ENCODE measurements at regions of chr10 and their contacts with region 1.

Region 1: GRCh38 chr10:60434418-60435046 is 44.9 kb upstream of the ANK3 start:
- DNase-seq: no peak
- ATAC-seq: no peak
- H3K4me3 ChIP-seq: no peak overlapping the region
- H3K27ac ChIP-seq: no peak overlapping the region
- H3K4me1 ChIP-seq: peaks cover under 1 to 1% of the 10 kb centered on the region in 2 donors
- H3K27me3 ChIP-seq: no peaks in the 10 kb centered on the region

Region 2: DNA sequence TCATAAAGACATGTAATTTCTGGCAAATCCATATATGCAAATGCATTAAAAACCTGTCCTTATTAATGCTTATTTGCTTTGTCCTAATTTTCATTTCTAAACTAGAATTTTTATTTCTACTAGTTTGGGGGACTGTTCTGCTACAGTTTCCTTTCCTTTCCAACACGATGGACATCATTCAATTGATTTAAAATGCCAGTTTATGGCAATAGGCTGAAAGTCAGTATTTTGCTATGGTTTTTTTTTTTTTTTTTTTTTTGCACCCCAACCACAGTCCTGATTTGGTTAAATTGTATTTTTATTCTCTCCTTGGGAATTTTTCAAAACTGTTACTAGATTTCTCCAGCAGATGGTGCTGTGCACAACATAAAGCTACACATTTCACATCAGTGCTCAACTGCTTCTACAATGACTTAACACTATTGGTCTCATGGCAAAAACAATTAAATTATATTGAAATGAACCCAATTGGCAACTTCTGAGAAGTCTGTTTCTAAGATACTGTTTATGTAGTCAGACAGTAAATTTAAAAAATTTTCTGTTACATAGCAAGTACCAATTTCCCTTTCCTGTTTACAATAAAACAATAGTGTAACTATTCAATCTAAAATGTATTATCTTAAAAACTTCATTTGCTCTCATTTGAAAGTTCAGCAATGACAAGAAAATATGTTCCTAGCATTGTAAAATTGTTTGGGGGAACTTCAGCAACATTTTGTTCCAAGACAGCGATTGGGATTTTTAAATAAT is 334.4 kb before region 1 on chr10:
- intact Hi-C with region 1: loop called (anchors 2 to 5 kb)
- DNase-seq: no peak
- ATAC-seq: peak; percentile 86
- H3K4me3 ChIP-seq: no peak overlapping the region
- H3K27ac ChIP-seq: no peak overlapping the region
- H3K4me1 ChIP-seq: peaks cover 2 to 4% of the 10 kb centered on the region in 2 donors
- H3K27me3 ChIP-seq: no peaks in the 10 kb centered on the region

Region 3: GRCh38 chr10:60208676-60209269 is 225.8 kb before region 1 on chr10:
- intact Hi-C with region 1: loop called in 1 of 2 experiments (anchors 5 kb)
- DNase-seq: no peak
- ATAC-seq: no peak
- H3K4me3 ChIP-seq: no peak overlapping the region
- H3K27ac ChIP-seq: no peak overlapping the region
- H3K4me1 ChIP-seq: peaks cover 0 to 3% of the 10 kb centered on the region in 2 donors
- H3K27me3 ChIP-seq: no peaks in the 10 kb centered on the region

Region 4: GRCh38 chr10:60237977-60238758 is 196.4 kb before region 1 on chr10:
- intact Hi-C with region 1: loop called in 1 of 2 experiments (anchors 10 kb)
- DNase-seq: peak in 1 of 2 donors; percentile 40
- ATAC-seq: no peak
- H3K4me3 ChIP-seq: peak overlapping the region in 1 of 2 donors; percentile 26
- H3K27ac ChIP-seq: no peak overlapping the region
- H3K4me1 ChIP-seq: no peaks in the 10 kb centered on the region
- H3K27me3 ChIP-seq: no peaks in the 10 kb centered on the region

Region 5: DNA sequence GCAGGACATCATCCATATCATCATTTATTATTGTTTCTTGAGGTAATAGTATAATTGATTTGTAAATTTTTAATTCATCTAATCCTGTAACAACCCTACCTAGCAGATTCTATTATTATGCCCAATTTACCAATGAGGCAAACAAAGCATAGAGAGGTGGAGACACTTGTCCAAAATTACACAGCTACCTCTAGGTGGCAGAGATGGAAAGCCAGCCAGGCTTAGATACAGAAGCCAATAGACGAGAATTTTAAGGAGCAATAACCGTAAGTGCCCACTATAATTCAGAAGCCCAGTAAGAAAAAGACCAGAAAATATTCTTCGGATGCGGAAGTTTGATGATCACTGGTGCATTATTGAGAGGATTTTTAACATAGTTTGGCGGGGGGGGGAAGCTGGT is 98.8 kb before region 1 on chr10:
- intact Hi-C with region 1: loop called (anchors 2 to 5 kb)
- DNase-seq: no peak
- ATAC-seq: no peak
- H3K4me3 ChIP-seq: no peak overlapping the region
- H3K27ac ChIP-seq: no peak overlapping the region
- H3K4me1 ChIP-seq: no peaks in the 10 kb centered on the region
- H3K27me3 ChIP-seq: no peaks in the 10 kb centered on the region

Region 6: GRCh38 chr10:60367431-60367830 is 67.1 kb before region 1 on chr10:
- intact Hi-C with region 1: no loop called
- DNase-seq: no peak
- ATAC-seq: no peak
- H3K4me3 ChIP-seq: no peak overlapping the region
- H3K27ac ChIP-seq: no peak overlapping the region
- H3K4me1 ChIP-seq: peaks cover 0 to 4% of the 10 kb centered on the region in 2 donors
- H3K27me3 ChIP-seq: no peaks in the 10 kb centered on the region

Region 7: GRCh38 chr10:60618861-60619260 is 184.3 kb after region 1 on chr10:
- intact Hi-C with region 1: no loop called
- DNase-seq: no peak
- ATAC-seq: no peak
- H3K4me3 ChIP-seq: no peak overlapping the region
- H3K27ac ChIP-seq: no peak overlapping the region
- H3K4me1 ChIP-seq: no peaks in the 10 kb centered on the region
- H3K27me3 ChIP-seq: no peaks in the 10 kb centered on the region